ENCODE measurements at regions of chr17 and their contacts with region 1.

Region 1: GRCh38 chr17:7862692-7863437 is 5.1 kb downstream of the CYB5D1 start:
- DNase-seq: peak; percentile 20
- H3K4me3 ChIP-seq: no peak overlapping the region
- H3K27ac ChIP-seq: no peak overlapping the region
- H3K4me1 ChIP-seq: peaks cover 17% of the 10 kb centered on the region
- H3K27me3 ChIP-seq: no peaks in the 10 kb centered on the region
- CTCF ChIP-seq: peak; percentile 83

Region 2: DNA sequence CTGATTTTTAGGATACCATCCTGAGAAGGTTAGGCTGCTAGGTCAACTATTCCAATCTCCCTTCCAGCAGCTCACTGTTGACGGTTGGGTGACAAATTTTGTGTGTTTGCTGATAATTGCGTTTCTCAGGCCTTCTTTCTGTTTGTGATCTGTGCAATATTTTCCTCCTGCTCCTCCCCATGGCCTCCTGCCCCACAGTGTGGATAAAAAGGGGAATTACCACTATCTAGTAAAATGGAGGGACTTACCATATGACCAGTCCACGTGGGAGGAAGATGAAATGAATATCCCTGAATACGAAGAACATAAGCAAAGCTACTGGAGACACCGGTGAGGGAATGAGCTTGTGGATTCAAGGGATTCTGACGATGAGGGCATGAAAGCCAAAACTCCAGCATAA is 34.9 kb after region 1 on chr17:
- intact Hi-C with region 1: loop called (anchors 5 kb)
- DNase-seq: no peak
- H3K4me3 ChIP-seq: no peak overlapping the region
- H3K27ac ChIP-seq: no peak overlapping the region
- H3K4me1 ChIP-seq: peaks cover 7% of the 10 kb centered on the region
- H3K27me3 ChIP-seq: no peaks in the 10 kb centered on the region
- CTCF ChIP-seq: peak; percentile 63

Measured in left ventricle myocardium inferior (tissue), 1 donor.